GM12878 (cell line): ENCODE measurements at regions of chr7 and their contacts with region 1.

Region 1: DNA sequence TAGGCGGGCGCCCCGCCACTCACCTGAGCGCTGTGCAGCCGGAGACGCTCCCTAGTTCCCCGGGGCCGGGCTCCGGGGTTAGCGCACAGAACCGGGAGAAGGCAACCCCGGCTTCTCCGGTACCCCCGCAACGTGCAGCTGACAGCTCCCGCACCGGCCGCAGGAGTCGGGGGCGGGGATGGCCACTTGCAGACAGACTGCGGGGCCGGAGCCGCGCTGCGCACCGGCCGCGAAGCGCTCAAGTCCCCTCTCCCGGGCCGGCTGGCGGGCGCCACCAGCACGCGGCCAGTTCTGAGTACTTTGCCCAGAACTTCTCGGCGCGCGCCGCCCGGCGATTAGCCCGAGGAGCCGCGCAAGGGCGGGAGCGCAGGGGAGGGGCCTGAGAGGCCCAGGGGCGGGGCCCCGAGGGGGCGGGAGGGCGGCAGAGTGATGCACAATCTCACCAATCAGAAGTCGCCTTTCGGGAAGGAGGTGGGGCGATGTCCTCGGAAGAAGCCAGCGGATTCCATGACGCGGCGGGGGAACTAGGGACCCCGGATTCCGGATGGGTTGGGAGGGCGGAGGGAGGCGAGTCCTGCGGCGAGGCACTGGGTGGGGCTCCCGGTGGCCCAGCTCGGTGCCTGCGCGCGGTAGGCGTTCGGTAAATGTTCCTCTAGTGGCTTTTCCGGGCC is at the start of gene OSBPL3:
- DNase-seq: peak; percentile 78
- ATAC-seq: peak; percentile 81
- H3K4me3 ChIP-seq: peak within 1 kb of the TSS; percentile 78
- H3K27ac ChIP-seq: peak within 1 kb of the TSS; percentile 78
- H3K4me1 ChIP-seq: peaks cover 5% of the 10 kb centered on the region
- H3K27me3 ChIP-seq: no peaks in the 10 kb centered on the region
- CTCF ChIP-seq: peak in 1 of 3 experiments; percentile 44; a peak in 2 of 6 replicates
- EP300 ChIP-seq: no peak
- POLR2A ChIP-seq: peak; percentile 87
- RAD21 ChIP-seq: peak; percentile 48
- polyA plus RNA-seq, gene OSBPL3: 6.1 to 15.2 TPM

Region 2: GRCh38 chr7:24812310-24812945 is 167.6 kb before region 1 on chr7:
- CTCF ChIA-PET with region 1: interaction called, 46 read pairs
- POLR2A ChIA-PET with region 1: interaction called, 4 read pairs
- RAD21 ChIA-PET with region 1: interaction called, 12 read pairs
- SMC1A ChIA-PET with region 1: interaction called, 11 read pairs
- in situ Hi-C with region 1: loop called (anchors 5 kb)
- intact Hi-C with region 1: no loop called
- DNase-seq: no peak
- ATAC-seq: peak; percentile 97
- H3K4me3 ChIP-seq: no peak overlapping the region
- H3K27ac ChIP-seq: no peak overlapping the region
- H3K4me1 ChIP-seq: no peaks in the 10 kb centered on the region
- H3K27me3 ChIP-seq: no peaks in the 10 kb centered on the region
- CTCF ChIP-seq: peak; percentile 78 to 81 (median 81)
- EP300 ChIP-seq: no peak
- POLR2A ChIP-seq: no peak
- RAD21 ChIP-seq: peak; percentile 78

Region 3: GRCh38 chr7:24842449-24843241 is 137.4 kb before region 1 on chr7:
- CTCF ChIA-PET with region 1: interaction called, 6 read pairs
- POLR2A ChIA-PET with region 1: interaction called, 3 read pairs
- RAD21 ChIA-PET with region 1: interaction called, 22 read pairs
- SMC1A ChIA-PET with region 1: interaction called, 19 read pairs
- in situ Hi-C with region 1: no loop called
- intact Hi-C with region 1: no loop called
- DNase-seq: no peak
- ATAC-seq: peak; percentile 86
- H3K4me3 ChIP-seq: no peak overlapping the region
- H3K27ac ChIP-seq: peak overlapping the region; percentile 64; the same call in 1 of the 2 replicates
- H3K4me1 ChIP-seq: peaks cover 20% of the 10 kb centered on the region
- H3K27me3 ChIP-seq: no peaks in the 10 kb centered on the region
- CTCF ChIP-seq: no peak
- EP300 ChIP-seq: peak; percentile 37 to 72; a peak in 2 of 4 replicates
- POLR2A ChIP-seq: no peak
- RAD21 ChIP-seq: no peak

Region 4: GRCh38 chr7:24907311-24907886 is 72.6 kb before region 1 on chr7:
- CTCF ChIA-PET with region 1: interaction called, 116 read pairs
- POLR2A ChIA-PET with region 1: interaction called, 21 read pairs
- RAD21 ChIA-PET with region 1: interaction called, 23 read pairs
- SMC1A ChIA-PET with region 1: interaction called, 34 read pairs
- in situ Hi-C with region 1: no loop called
- intact Hi-C with region 1: no loop called
- DNase-seq: peak; percentile 44
- ATAC-seq: peak; percentile 74
- H3K4me3 ChIP-seq: peak overlapping the region; percentile 4; the same call in 1 of the 2 replicates
- H3K27ac ChIP-seq: peak overlapping the region; percentile 80
- H3K4me1 ChIP-seq: peaks cover 51% of the 10 kb centered on the region
- H3K27me3 ChIP-seq: no peaks in the 10 kb centered on the region
- CTCF ChIP-seq: no peak
- EP300 ChIP-seq: no peak
- POLR2A ChIP-seq: no peak
- RAD21 ChIP-seq: 0 out of 2 replicates have a peak, but pooled peaks have one; percentile 7

Region 5: GRCh38 chr7:24948739-24949138 is 31.3 kb before region 1 on chr7:
- CTCF ChIA-PET with region 1: interaction called, 8 read pairs
- POLR2A ChIA-PET with region 1: interaction called, 12 read pairs
- RAD21 ChIA-PET with region 1: interaction called, 19 read pairs
- SMC1A ChIA-PET with region 1: interaction called, 6 read pairs
- in situ Hi-C with region 1: no loop called
- intact Hi-C with region 1: no loop called
- DNase-seq: no peak
- ATAC-seq: peak; percentile 47
- H3K4me3 ChIP-seq: no peak overlapping the region
- H3K27ac ChIP-seq: peak overlapping the region; percentile 7; the same call in 1 of the 2 replicates
- H3K4me1 ChIP-seq: peaks cover 12% of the 10 kb centered on the region; the same call in 1 of the 2 replicates
- H3K27me3 ChIP-seq: no peaks in the 10 kb centered on the region
- CTCF ChIP-seq: no peak
- EP300 ChIP-seq: no peak
- POLR2A ChIP-seq: no peak
- RAD21 ChIP-seq: no peak

Region 6: GRCh38 chr7:25028370-25029021 is 48.5 kb after region 1 on chr7:
- CTCF ChIA-PET with region 1: no interaction called
- POLR2A ChIA-PET with region 1: no interaction called
- RAD21 ChIA-PET with region 1: interaction called, 4 read pairs
- SMC1A ChIA-PET with region 1: interaction called, 3 read pairs
- in situ Hi-C with region 1: no loop called
- intact Hi-C with region 1: loop called (anchors 5 kb)
- DNase-seq: no peak
- ATAC-seq: peak; percentile 40
- H3K4me3 ChIP-seq: no peak overlapping the region
- H3K27ac ChIP-seq: no peak overlapping the region; the same call in 1 of the 2 replicates
- H3K4me1 ChIP-seq: peaks cover 19% of the 10 kb centered on the region
- H3K27me3 ChIP-seq: peaks cover 0 to 4% of the 10 kb centered on the region in 2 experiments; a peak in 1 of 4 replicates
- CTCF ChIP-seq: no peak
- EP300 ChIP-seq: 0 out of 4 replicates have a peak, but pooled peaks have one; percentile 2 to 20
- POLR2A ChIP-seq: no peak
- RAD21 ChIP-seq: no peak

Region 7: GRCh38 chr7:25098096-25099046 is 118.4 kb after region 1 on chr7:
- CTCF ChIA-PET with region 1: interaction called, 112 read pairs
- POLR2A ChIA-PET with region 1: interaction called, 4 read pairs
- RAD21 ChIA-PET with region 1: interaction called, 11 read pairs
- SMC1A ChIA-PET with region 1: interaction called, 29 read pairs
- in situ Hi-C with region 1: no loop called
- intact Hi-C with region 1: loop called (anchors 2 kb)
- DNase-seq: no peak
- ATAC-seq: peak; percentile 79
- H3K4me3 ChIP-seq: no peak overlapping the region
- H3K27ac ChIP-seq: no peak overlapping the region
- H3K4me1 ChIP-seq: peaks cover 2% of the 10 kb centered on the region
- H3K27me3 ChIP-seq: no peaks in the 10 kb centered on the region
- CTCF ChIP-seq: peak; percentile 90 to 95 (median 91)
- EP300 ChIP-seq: no peak
- POLR2A ChIP-seq: no peak
- RAD21 ChIP-seq: peak; percentile 90

Region 8: DNA sequence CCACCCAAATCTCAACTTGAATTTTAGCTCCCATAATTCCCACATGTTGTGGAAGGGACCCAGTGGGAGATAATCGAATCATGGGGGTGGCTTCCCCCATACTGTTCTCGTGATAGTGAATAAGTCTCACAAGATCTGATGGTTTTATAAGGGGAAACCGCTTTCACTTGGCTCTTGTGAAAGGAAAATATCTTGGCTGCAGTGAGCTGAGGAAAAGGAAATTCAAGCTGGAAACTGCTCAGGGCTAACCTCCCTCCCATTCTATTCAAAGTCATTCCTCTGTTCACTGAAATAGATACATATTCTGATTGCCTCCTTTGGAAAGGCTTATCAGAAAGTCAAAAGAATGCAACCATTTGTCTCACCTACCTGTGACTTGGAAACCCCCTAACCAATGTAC is 129.3 kb after region 1 on chr7:
- CTCF ChIA-PET with region 1: no interaction called
- POLR2A ChIA-PET with region 1: no interaction called
- RAD21 ChIA-PET with region 1: no interaction called
- SMC1A ChIA-PET with region 1: no interaction called
- in situ Hi-C with region 1: no loop called
- intact Hi-C with region 1: no loop called
- DNase-seq: no peak
- ATAC-seq: no peak
- H3K4me3 ChIP-seq: no peak overlapping the region
- H3K27ac ChIP-seq: no peak overlapping the region
- H3K4me1 ChIP-seq: no peaks in the 10 kb centered on the region
- H3K27me3 ChIP-seq: no peaks in the 10 kb centered on the region
- CTCF ChIP-seq: no peak
- EP300 ChIP-seq: no peak
- POLR2A ChIP-seq: no peak
- RAD21 ChIP-seq: no peak